ENCODE measurements at regions of chr17 and their contacts with region 1.

Region 1: GRCh38 chr17:50841949-50842354 is 6.6 kb downstream of the WFIKKN2 start:
- DNase-seq: peak; percentile 75 to 91
- H3K4me3 ChIP-seq: no peak overlapping the region
- H3K27ac ChIP-seq: no peak overlapping the region
- H3K4me1 ChIP-seq: peaks cover 0 to 3% (median 0%) of the 10 kb centered on the region in 4 donors
- H3K27me3 ChIP-seq: no peaks in the 10 kb centered on the region
- CTCF ChIP-seq: peak in 5 of 7 experiments; percentile 69 to 91 (median 82)
- EP300 ChIP-seq: no peak
- POLR2A ChIP-seq: no peak

Region 2: GRCh38 chr17:50547035-50547735 is 294.8 kb before region 1 on chr17 and contains the start of gene SPATA20:
- intact Hi-C with region 1: loop called (anchors 10 kb)
- DNase-seq: peak; percentile 95 to 97
- H3K4me3 ChIP-seq: peak within 1 kb of the TSS; percentile 52 to 64 (median 60)
- H3K27ac ChIP-seq: peak within 1 kb of the TSS; percentile 82 to 91 (median 88)
- H3K4me1 ChIP-seq: peaks cover 34 to 73% (median 56%) of the 10 kb centered on the region in 4 donors
- H3K27me3 ChIP-seq: no peaks in the 10 kb centered on the region
- CTCF ChIP-seq: peak in 5 of 7 experiments; percentile 94 to 98 (median 97)
- EP300 ChIP-seq: no peak
- POLR2A ChIP-seq: peak in 1 of 4 donors; percentile 22
- total RNA-seq, gene SPATA20: 45.0 to 1,214 (median 194) TPM

Region 3: DNA sequence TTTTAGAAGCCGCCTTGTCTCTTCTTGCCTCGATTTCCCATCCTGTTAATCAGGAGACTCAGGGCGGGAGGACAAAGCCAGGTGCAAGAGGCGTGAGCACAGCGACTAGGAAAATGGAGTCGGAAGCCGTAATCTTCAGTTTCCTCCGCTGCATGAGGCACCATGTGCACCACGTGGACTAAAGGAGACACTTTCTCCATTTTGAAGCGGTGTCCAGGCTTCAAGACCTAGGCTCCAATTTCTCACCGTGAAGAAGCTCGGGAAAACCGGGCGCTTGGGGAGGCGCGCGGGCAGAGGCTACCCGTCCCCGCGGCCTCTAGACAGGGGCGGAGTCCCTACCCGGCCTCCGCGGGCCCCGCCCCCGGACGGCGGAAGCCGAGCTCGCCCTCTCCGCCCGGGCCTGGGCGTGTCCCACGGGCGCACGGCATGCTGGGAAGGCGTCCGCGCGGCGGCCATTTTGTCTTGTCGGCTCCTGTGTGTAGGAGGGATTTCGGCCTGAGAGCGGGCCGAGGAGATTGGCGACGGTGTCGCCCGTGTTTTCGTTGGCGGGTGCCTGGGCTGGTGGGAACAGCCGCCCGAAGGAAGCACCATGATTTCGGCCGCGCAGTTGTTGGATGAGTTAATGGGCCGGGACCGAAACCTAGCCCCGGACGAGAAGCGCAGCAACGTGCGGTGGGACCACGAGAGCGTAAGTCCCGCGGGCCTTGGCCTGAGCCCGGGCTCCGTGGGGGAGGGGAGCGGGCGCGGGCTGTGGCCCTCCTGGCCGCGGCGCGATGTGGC is 122.6 kb before region 1 on chr17 and contains the start of gene LUC7L3:
- intact Hi-C with region 1: no loop called
- DNase-seq: peak; percentile 95 to 98
- H3K4me3 ChIP-seq: peak within 1 kb of the TSS; percentile 68 to 92 (median 76)
- H3K27ac ChIP-seq: peak within 1 kb of the TSS; percentile 88 to 100 (median 99)
- H3K4me1 ChIP-seq: peaks cover 32 to 45% (median 42%) of the 10 kb centered on the region in 4 donors
- H3K27me3 ChIP-seq: no peaks in the 10 kb centered on the region
- CTCF ChIP-seq: no peak
- EP300 ChIP-seq: no peak
- POLR2A ChIP-seq: peak in 1 of 4 donors; percentile 49
- total RNA-seq, gene LUC7L3: 170 to 429 (median 221) TPM

Region 4: DNA sequence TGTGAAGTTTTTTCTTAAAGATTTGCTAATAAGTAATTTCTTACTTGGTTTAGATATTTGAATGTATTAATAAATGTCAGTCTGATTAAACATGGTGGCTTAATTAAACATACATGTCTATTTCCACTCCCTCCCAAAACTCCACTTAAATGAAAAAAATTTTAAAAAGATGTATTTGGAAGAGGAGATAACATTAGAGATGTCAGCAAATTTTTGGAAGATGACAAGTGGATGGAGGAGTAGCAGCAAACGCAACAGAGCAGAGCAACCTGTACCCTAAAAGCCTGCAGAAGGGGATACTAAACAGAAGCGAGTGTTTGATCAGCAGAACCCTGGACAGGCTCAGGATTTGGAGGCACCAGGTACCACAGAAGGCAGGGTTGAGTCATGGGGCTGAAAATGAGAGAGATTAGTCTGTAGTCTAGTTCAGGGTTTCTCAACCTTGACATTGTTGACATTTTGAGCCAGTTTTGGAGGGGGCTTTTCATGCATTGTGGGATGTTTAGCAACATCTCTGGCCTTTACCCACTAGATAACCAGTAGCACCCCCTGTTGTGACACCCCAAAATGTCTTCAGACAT is 104.7 kb before region 1 on chr17:
- intact Hi-C with region 1: no loop called
- DNase-seq: no peak
- H3K4me3 ChIP-seq: no peak overlapping the region
- H3K27ac ChIP-seq: no peak overlapping the region
- H3K4me1 ChIP-seq: peaks cover 3 to 61% (median 31%) of the 10 kb centered on the region in 4 donors
- H3K27me3 ChIP-seq: no peaks in the 10 kb centered on the region
- CTCF ChIP-seq: no peak
- EP300 ChIP-seq: no peak
- POLR2A ChIP-seq: no peak

Region 5: GRCh38 chr17:50783193-50783660 is 58.7 kb before region 1 on chr17:
- intact Hi-C with region 1: loop called (anchors 5 kb)
- DNase-seq: peak; percentile 90 to 95
- H3K4me3 ChIP-seq: no peak overlapping the region
- H3K27ac ChIP-seq: no peak overlapping the region
- H3K4me1 ChIP-seq: peaks cover 8 to 31% (median 17%) of the 10 kb centered on the region in 4 donors
- H3K27me3 ChIP-seq: no peaks in the 10 kb centered on the region
- CTCF ChIP-seq: peak in 6 of 7 experiments; percentile 47 to 99 (median 99)
- EP300 ChIP-seq: no peak
- POLR2A ChIP-seq: no peak

Region 6: DNA sequence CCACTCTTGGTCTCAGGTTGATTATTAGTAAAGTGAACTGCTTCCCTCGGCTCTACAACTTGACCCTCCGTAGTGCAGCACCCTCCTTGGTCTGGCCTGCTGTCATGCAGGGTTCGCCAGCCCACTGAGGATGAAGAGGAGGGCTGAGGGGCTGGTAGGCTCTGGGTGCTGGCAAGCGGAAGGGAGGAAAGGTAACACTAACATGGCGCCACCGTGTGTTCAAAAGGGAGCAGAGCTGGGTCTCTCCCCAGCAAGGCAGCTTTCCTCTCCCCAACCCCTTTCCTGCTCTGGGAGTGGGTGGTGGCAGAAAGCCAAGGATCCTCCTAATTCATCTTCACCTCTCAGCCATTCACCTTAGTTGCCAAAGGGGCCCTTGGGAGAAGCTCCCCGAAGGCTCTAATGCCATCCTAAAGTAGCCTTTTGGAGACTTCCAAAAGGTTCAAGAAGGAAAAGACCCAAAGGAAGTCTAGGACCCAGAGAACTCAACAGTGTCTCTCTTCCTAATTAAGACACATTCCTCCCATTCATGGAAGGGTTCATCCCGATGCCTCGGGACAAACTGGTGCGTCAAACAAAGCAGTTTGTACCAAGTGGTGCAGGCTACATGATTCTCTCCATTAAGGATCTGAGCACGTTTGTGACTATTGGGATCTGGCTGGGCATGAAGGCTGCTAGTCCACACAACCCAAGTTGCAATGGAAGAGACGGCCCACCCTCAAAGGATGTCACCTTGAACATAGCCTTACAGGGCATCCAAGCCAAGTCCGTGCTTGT is 115.0 kb after region 1 on chr17:
- intact Hi-C with region 1: loop called (anchors 5 kb)
- DNase-seq: peak; percentile 69 to 85
- H3K4me3 ChIP-seq: no peak overlapping the region
- H3K27ac ChIP-seq: peak overlapping the region in 4 of 5 donors; percentile 10 to 66 (median 40)
- H3K4me1 ChIP-seq: peaks cover 0 to 29% (median 20%) of the 10 kb centered on the region in 4 donors
- H3K27me3 ChIP-seq: no peaks in the 10 kb centered on the region
- CTCF ChIP-seq: peak in 5 of 7 experiments; percentile 55 to 81 (median 73)
- EP300 ChIP-seq: no peak
- POLR2A ChIP-seq: no peak